ENCODE measurements at regions of chr15 and their contacts with region 1.

Region 1: GRCh38 chr15:63277038-63277892 is at the start of gene APH1B:
- DNase-seq: peak; percentile 89
- H3K4me3 ChIP-seq: peak within 1 kb of the TSS; percentile 91
- H3K27ac ChIP-seq: peak within 1 kb of the TSS; percentile 90
- H3K4me1 ChIP-seq: peaks cover 20% of the 10 kb centered on the region
- H3K27me3 ChIP-seq: no peaks in the 10 kb centered on the region
- CTCF ChIP-seq: peak; percentile 12
- total RNA-seq, gene APH1B: 6.2 TPM

Region 2: GRCh38 chr15:63157118-63157843 is 120.0 kb before region 1 on chr15 and contains the start of gene RPS27L:
- intact Hi-C with region 1: loop called (anchors 10 kb)
- DNase-seq: peak; percentile 92
- H3K4me3 ChIP-seq: peak within 1 kb of the TSS; percentile 78
- H3K27ac ChIP-seq: peak within 1 kb of the TSS; percentile 97
- H3K4me1 ChIP-seq: peaks cover 56% of the 10 kb centered on the region
- H3K27me3 ChIP-seq: no peaks in the 10 kb centered on the region
- CTCF ChIP-seq: no peak
- total RNA-seq, gene RPS27L: 165 TPM

Region 3: DNA sequence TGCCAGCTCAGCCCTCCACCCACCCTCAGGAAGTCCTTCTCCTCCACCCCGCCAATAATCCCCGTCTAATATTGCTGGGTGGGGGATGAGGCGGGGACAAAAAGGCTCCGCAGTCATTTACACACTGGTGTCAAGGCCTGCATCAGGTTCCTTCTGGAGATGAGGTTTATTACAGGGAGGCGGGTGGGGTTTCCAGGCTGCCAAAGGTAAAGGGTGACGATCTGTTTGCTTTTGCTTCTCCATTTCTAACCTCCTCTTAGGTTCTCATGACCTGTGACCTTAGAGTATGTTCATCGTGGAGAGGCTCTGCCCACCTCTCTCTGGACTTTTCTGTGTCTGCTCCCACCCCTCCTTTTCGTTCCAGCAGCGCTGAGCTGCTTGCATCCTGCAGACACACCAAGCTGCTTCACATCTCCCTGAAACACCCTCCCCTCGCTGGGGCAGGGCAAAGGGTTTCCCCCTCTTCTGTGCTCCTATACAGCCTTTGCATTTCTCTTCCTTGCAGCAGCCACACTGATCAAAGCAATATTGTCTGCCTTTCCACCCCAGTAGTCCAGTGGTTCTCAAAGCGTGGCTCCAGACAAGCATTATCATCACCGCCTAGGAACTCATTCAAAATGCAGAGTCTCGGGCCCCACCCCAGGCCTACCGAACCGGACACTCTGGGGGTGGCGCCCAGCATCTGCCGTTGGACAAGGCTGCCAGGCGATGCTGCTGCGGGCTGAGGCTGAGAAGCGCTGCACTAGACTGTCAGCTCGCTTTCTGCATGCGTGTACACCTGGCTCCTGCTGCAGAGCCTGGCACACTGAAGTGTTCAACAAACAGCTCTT is 77.8 kb after region 1 on chr15:
- intact Hi-C with region 1: no loop called
- DNase-seq: no peak
- H3K4me3 ChIP-seq: no peak overlapping the region
- H3K27ac ChIP-seq: no peak overlapping the region
- H3K4me1 ChIP-seq: peaks cover 9% of the 10 kb centered on the region
- H3K27me3 ChIP-seq: no peaks in the 10 kb centered on the region
- CTCF ChIP-seq: no peak